ENCODE measurements at regions of chr15 and their contacts with region 1.

Region 1: DNA sequence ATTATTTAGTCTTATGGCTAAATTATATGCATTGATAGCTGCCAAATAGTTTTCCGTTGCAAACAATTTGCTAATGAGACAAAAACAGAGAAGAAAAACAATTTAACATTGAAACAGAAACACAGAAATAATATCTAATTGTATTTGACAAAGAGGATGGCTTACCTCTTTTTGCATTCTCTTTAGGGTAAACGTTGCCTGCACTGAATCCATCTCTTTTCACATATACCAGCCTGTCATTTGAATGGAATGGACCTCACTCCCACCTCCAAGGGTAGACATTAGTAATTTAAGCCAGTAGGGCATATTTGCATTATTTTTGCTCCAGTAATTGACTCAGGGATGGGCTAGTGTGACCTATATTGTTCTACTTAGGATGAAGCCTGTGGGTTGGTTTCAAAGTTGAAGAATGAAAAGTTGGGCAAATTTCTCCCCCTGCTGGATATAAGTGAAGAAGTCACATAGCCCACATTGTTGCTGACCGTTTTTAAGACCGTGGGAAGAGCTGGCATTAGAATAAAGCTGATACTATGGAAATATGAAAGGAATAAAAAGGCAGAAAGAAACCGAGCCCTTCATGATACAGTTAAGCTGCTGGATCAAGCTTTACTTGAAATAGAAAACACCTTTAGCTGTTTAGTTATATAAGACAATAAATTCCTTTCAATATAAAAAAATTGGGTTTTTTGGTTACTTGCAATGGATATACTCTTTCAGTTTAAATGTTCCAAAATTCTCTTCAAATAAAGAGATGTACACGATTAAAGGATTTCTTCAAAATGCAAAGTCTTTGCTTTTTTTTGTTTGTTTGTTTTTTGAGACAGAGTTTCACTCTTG is 26.9 kb downstream of the PIERCE2 start:
- DNase-seq: no peak
- H3K4me3 ChIP-seq: no peak overlapping the region
- H3K27ac ChIP-seq: no peak overlapping the region
- H3K4me1 ChIP-seq: no peaks in the 10 kb centered on the region
- H3K27me3 ChIP-seq: no peaks in the 10 kb centered on the region
- CTCF ChIP-seq: peak; percentile 16 to 56 (median 42)

Region 2: GRCh38 chr15:55221090-55222011 is 213.9 kb before region 1 on chr15:
- intact Hi-C with region 1: loop called (anchors 5 kb)
- DNase-seq: peak in 1 of 2 donors; percentile 66
- H3K4me3 ChIP-seq: no peak overlapping the region
- H3K27ac ChIP-seq: peak overlapping the region; percentile 76 to 87
- H3K4me1 ChIP-seq: peaks cover 0 to 4% of the 10 kb centered on the region in 2 donors
- H3K27me3 ChIP-seq: no peaks in the 10 kb centered on the region
- CTCF ChIP-seq: no peak

Region 3: DNA sequence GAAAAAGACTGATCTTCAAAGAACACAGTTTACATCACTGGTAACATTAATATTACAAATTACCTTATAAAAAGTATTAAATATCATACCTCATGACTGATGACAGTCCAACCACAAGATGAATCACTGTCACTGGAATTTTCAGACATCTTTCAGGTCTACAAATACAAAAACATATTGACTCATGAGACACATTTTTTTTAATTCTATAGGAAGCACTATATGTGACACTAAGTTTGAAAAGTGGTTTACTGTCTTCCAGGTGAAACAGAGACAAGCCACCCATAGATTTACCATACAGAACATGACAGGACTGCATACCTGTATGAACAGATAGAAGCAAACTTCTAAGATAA is 46.0 kb before region 1 on chr15:
- intact Hi-C with region 1: no loop called
- DNase-seq: no peak
- H3K4me3 ChIP-seq: no peak overlapping the region
- H3K27ac ChIP-seq: no peak overlapping the region
- H3K4me1 ChIP-seq: no peaks in the 10 kb centered on the region
- H3K27me3 ChIP-seq: no peaks in the 10 kb centered on the region
- CTCF ChIP-seq: no peak

Region 4: GRCh38 chr15:55407949-55408791 is 27.0 kb before region 1 on chr15 and contains the starts of genes CCPG1 and PIERCE2:
- intact Hi-C with region 1: no loop called
- DNase-seq: peak; percentile 79 to 96
- H3K4me3 ChIP-seq: peak within 1 kb of the TSS; percentile 79 to 81
- H3K27ac ChIP-seq: peak within 1 kb of the TSS; percentile 93
- H3K4me1 ChIP-seq: peaks cover 5 to 27% of the 10 kb centered on the region in 2 donors
- H3K27me3 ChIP-seq: no peaks in the 10 kb centered on the region
- CTCF ChIP-seq: peak; percentile 90 to 96 (median 96)
- total RNA-seq, gene CCPG1: 44.5 TPM
- total RNA-seq, gene PIERCE2: not detected

Measured in ascending aorta (tissue), 2 donors.